Adrenal gland (tissue), 19 donors: ENCODE measurements at regions of chr2 and their contacts with region 1.

Region 1: DNA sequence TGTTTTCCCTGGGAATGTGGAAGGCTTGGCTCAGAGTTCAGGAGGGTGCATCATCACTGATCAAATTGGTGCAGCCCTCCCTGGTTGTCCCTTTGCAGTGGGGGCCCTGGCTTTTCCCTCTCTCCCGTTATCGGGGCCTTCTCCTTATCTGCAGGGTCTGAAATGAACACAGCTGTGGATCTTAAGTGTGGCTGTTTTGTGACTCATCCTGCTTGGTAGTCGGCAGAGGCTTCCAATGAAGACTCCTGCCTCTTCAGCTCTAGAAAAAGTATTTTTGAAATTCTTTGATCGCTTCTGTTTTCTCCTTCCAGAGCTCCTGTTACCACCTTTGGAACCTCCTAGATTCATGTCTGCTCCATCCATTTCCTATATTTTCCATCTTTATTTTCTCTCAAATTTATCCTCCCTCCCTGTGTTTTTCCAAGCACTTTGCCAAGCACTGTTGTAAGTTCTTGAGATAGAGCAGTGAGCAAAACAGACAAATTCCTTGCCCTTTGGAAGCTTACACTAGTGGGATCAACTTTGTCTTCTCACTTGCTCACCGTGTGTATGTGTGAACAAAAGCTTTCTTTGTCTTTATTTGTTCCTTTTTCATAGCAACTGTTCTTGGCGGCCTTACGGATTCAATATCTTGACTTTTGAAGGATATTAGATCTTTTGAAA is 45.7 kb downstream of the RALB start:
- DNase-seq: no peak
- H3K4me3 ChIP-seq: no peak overlapping the region
- H3K27ac ChIP-seq: no peak overlapping the region
- H3K4me1 ChIP-seq: no peaks in the 10 kb centered on the region
- H3K27me3 ChIP-seq: no peaks in the 10 kb centered on the region
- CTCF ChIP-seq: no peak
- POLR2A ChIP-seq: no peak

Region 2: DNA sequence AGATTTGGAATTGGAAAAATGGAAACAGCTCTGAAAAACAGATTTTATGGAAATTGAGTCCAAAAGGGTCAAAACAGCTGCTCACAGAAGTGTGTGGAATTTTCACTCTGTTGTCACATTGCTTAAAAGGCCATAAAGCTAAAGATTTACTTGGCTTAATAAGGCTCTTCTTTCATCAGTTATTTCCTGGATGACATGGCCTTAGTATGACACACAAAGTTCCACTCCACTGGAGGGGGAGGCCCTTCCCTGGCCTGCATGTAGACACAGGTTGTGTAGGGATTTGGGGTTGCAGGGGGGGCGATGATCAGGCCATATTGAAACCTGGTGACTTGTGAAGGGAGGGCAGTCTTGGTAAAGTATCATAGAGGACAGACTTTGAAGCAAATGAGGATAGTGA is 109.1 kb before region 1 on chr2:
- intact Hi-C with region 1: no loop called
- DNase-seq: no peak
- H3K4me3 ChIP-seq: no peak overlapping the region
- H3K27ac ChIP-seq: no peak overlapping the region
- H3K4me1 ChIP-seq: no peaks in the 10 kb centered on the region
- H3K27me3 ChIP-seq: no peaks in the 10 kb centered on the region
- CTCF ChIP-seq: no peak
- POLR2A ChIP-seq: no peak

Region 3: GRCh38 chr2:120239488-120240287 is 58.6 kb before region 1 on chr2:
- intact Hi-C with region 1: no loop called
- DNase-seq: peak; percentile 78 to 93 (median 88)
- H3K4me3 ChIP-seq: peak overlapping the region in 1 of 4 donors; percentile 19
- H3K27ac ChIP-seq: peak overlapping the region in 3 of 5 donors; percentile 80 to 89 (median 88)
- H3K4me1 ChIP-seq: peaks cover 7 to 20% of the 10 kb centered on the region in 2 donors
- H3K27me3 ChIP-seq: no peaks in the 10 kb centered on the region
- CTCF ChIP-seq: no peak
- POLR2A ChIP-seq: no peak

Region 4: DNA sequence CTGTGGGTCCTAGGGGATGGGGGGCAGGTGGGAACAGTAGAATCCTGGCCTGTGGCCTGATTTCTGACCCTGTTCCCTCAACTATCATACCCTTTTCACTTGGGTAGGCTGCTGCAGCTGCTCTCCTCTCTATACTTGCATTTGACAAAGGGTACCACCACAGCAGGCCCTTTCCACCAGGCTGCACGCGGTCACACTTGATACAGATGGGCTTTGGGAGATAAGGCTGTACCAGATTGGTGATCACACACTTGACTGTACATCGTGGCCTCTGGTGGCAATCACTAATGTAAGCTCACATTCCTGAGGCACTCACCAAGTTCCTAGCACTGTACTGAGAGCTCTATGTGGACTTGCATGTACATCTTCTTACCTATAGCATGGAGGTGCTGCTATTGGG is 47.2 kb before region 1 on chr2:
- intact Hi-C with region 1: no loop called
- DNase-seq: no peak
- H3K4me3 ChIP-seq: no peak overlapping the region
- H3K27ac ChIP-seq: no peak overlapping the region
- H3K4me1 ChIP-seq: peaks cover 11 to 31% of the 10 kb centered on the region in 2 donors
- H3K27me3 ChIP-seq: no peaks in the 10 kb centered on the region
- CTCF ChIP-seq: no peak
- POLR2A ChIP-seq: no peak

Region 5: DNA sequence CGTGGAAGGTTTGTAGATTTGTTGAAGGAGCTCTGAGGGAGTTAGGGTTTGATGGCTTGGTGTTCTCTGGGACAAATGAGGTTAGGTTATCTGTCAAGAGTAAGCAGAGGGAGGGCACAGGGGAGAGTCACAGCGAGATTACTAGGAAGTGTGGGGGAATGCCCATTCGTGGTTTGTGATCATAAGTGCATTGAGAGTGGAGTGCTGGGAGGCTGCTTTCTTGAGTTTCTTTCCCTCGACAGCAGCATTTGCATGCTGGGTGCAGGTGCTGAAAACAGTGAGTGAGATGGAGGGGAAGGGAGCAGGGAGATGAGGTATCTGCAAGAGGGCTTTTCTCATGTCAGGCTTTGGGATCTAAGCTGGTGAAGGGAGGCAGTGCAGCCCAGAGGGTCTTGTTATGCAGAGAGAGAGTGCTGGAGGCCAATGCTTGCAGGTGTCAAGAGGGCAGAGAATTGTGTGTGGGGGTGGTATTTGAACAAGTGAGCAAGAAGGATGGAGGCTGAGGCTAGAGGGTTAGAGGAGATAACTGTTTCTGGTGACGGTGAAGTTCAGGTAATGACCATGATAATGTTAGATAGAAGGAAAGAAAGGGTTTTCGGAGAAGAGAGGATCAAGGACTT is 36.8 kb before region 1 on chr2:
- intact Hi-C with region 1: loop called in 1 of 2 experiments (anchors 5 kb)
- DNase-seq: no peak
- H3K4me3 ChIP-seq: no peak overlapping the region
- H3K27ac ChIP-seq: no peak overlapping the region
- H3K4me1 ChIP-seq: peaks cover 10 to 19% of the 10 kb centered on the region in 2 donors
- H3K27me3 ChIP-seq: no peaks in the 10 kb centered on the region
- CTCF ChIP-seq: no peak
- POLR2A ChIP-seq: no peak

Region 6: DNA sequence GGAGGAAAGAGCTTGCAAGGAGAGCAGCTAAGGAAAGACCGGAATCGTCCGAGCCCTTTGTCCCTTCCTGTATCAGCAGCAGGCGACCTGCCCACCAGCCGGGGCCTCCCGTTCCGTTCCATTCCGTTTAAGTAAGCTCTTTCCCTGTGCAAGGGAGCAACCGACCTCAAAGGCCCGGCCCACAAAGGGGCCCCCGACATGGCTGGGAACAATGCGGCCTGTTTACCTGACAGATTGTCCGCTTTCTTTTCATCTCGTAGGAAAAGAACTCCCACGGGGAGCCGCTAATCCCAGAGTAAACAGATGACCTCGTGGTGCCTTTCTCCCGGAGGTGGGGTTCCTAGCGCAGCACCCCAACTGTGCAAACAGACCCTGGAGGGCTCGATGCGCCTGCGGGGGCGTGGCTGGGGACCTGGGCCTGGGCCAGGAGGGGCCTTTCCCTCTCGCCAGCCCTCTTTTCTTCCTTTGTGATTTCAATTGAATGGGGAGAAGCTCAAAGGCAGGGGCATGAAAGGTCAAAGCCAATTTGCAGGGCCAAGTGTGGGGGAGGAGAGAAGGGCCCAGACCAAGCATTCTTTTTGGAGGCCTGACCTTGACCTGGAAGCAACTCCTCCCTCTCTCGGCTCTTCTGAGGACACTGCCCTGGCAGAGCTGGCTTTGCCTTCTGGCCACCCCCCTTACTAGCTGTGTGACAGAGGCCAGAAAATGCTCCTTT is 167.8 kb after region 1 on chr2:
- intact Hi-C with region 1: no loop called
- DNase-seq: no peak
- H3K4me3 ChIP-seq: no peak overlapping the region
- H3K27ac ChIP-seq: no peak overlapping the region
- H3K4me1 ChIP-seq: peaks cover 18 to 37% of the 10 kb centered on the region in 2 donors
- H3K27me3 ChIP-seq: no peaks in the 10 kb centered on the region
- CTCF ChIP-seq: no peak
- POLR2A ChIP-seq: no peak